CD4-positive, alpha-beta memory T cell (primary cell): ENCODE measurements at regions of chr13 and their contacts with region 1.

Region 1: DNA sequence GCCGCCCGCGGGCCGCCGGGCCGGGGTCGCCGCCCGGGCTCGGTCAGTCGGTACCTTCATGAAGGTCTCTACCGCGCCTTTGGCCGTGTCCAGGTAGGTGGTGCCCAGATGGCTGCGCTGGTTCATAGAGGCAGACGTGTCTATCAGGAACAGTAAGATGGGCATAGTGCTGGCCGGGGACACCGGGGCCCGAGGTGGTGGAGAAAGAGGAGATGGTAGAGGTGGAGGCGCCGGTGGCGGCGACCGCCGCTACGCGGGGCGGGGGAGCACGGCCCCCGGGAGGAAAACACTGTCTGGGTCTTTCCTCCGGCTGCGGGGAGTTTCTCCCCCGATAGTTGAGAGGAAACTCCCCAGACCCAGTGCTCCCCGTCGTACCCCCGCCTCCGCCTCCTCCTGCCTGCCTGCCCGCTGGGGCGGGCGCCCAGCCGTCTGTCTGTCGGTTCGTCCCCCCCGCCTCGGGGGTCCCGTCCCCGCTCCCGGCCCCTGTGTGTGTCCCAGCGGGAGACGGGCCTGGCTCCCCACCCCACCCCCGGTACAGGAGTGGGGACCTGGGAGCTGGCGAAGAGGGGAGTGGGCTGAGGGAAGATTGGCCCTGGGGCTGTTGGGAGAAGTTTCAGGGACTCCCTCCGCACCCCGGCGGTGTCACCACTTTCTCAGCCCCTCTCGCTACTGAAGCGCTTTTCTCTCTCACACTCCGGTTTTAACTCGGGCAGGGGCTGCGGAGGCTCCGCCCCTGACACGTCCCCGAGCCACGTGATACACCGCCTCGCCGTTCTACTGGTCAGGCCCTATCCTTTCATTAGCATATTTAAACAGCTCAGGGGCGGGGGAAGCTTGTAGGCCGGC is at the start of gene INTS6:
- DNase-seq: peak; percentile 98 to 100 (median 100)
- H3K4me3 ChIP-seq: peak within 1 kb of the TSS; percentile 62 to 82
- H3K4me3 Mint-ChIP-seq: peak within 1 kb of the TSS; percentile 89 to 96 (median 94)
- H3K27ac ChIP-seq: peak within 1 kb of the TSS; percentile 97
- H3K27ac Mint-ChIP-seq: peak within 1 kb of the TSS; percentile 94 to 99 (median 98)
- H3K4me1 ChIP-seq: peaks cover 42% of the 10 kb centered on the region
- H3K4me1 Mint-ChIP-seq: peaks cover 34 to 65% (median 40%) of the 10 kb centered on the region in 4 donors
- H3K27me3 ChIP-seq: no peaks in the 10 kb centered on the region
- H3K27me3 Mint-ChIP-seq: peaks cover 0 to 1% of the 10 kb centered on the region in 2 donors
- total RNA-seq, gene INTS6: 55.7 to 65.6 TPM

Region 2: GRCh38 chr13:49495783-49496762 is 1956.5 kb before region 1 on chr13 and contains the start of gene PHF11:
- CTCF ChIA-PET with region 1: no interaction called
- POLR2A ChIA-PET with region 1: no interaction called
- intact Hi-C with region 1: loop called (anchors 5 kb)
- DNase-seq: peak; percentile 85 to 93 (median 87)
- H3K4me3 ChIP-seq: peak within 1 kb of the TSS; percentile 58 to 74
- H3K4me3 Mint-ChIP-seq: peak within 1 kb of the TSS; percentile 98 to 99 (median 98)
- H3K27ac ChIP-seq: peak within 1 kb of the TSS; percentile 94
- H3K27ac Mint-ChIP-seq: peak within 1 kb of the TSS; percentile 99
- H3K4me1 ChIP-seq: peaks cover 54% of the 10 kb centered on the region
- H3K4me1 Mint-ChIP-seq: peaks cover 40 to 64% (median 49%) of the 10 kb centered on the region in 4 donors
- H3K27me3 ChIP-seq: no peaks in the 10 kb centered on the region
- H3K27me3 Mint-ChIP-seq: no peaks in the 10 kb centered on the region
- total RNA-seq, gene PHF11: 138 to 139 TPM

Region 3: DNA sequence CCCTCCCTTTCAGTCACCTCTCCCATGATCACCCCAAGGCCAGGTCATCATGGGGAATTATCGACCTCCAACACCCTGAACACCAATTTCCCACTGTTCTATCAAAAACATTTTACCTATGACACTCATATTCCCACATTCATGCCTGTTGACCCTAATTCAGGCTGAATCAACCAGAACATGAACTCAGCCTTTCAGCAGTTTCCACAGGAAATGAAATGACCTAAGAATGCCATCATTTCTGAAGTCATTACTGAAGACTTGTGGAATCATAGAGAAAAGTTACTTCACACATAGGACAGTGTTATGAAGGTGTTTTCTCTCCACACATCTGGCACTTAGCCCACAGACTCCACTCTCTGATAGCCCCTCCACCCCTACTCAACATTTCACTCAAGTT is 260.2 kb before region 1 on chr13:
- CTCF ChIA-PET with region 1: no interaction called
- POLR2A ChIA-PET with region 1: no interaction called
- intact Hi-C with region 1: no loop called
- DNase-seq: no peak
- H3K4me3 ChIP-seq: no peak overlapping the region
- H3K4me3 Mint-ChIP-seq: no peak overlapping the region
- H3K27ac ChIP-seq: no peak overlapping the region
- H3K27ac Mint-ChIP-seq: no peak overlapping the region
- H3K4me1 ChIP-seq: no peaks in the 10 kb centered on the region
- H3K4me1 Mint-ChIP-seq: no peaks in the 10 kb centered on the region
- H3K27me3 ChIP-seq: no peaks in the 10 kb centered on the region
- H3K27me3 Mint-ChIP-seq: peaks cover 21 to 22% of the 10 kb centered on the region in 2 donors

Region 4: DNA sequence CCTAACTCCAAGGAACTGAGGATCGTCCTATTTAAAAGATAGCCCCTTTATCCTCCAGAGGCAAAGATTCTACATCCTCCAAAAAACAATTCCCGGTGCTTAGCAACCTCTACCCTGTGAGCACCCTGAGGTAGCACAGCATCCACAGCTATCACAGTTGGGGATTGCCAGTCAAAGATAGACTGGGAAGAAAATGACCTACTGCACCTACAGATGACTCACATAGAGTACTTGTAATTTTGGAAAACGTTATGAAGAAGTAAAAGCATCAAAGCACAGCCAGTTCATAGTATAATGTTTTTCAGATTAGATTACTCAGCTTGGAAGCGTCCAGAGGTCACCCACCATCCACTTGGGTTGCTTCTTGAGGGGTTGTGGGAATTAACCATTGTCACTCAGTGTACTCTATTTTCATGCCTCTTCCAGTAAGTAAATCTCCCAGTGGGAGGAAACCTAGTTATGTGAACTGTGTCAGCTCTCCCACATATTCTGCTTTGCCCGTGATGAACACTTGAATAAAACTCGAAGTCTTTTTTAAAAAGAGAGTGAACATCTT is 239.3 kb before region 1 on chr13:
- CTCF ChIA-PET with region 1: no interaction called
- POLR2A ChIA-PET with region 1: no interaction called
- intact Hi-C with region 1: no loop called
- DNase-seq: no peak
- H3K4me3 ChIP-seq: no peak overlapping the region
- H3K4me3 Mint-ChIP-seq: no peak overlapping the region
- H3K27ac ChIP-seq: no peak overlapping the region
- H3K27ac Mint-ChIP-seq: no peak overlapping the region
- H3K4me1 ChIP-seq: no peaks in the 10 kb centered on the region
- H3K4me1 Mint-ChIP-seq: no peaks in the 10 kb centered on the region
- H3K27me3 ChIP-seq: no peaks in the 10 kb centered on the region
- H3K27me3 Mint-ChIP-seq: peaks cover 39 to 43% of the 10 kb centered on the region in 2 donors

Region 5: GRCh38 chr13:51380269-51380668 is 72.3 kb before region 1 on chr13:
- CTCF ChIA-PET with region 1: no interaction called
- POLR2A ChIA-PET with region 1: no interaction called
- intact Hi-C with region 1: no loop called
- DNase-seq: no peak
- H3K4me3 ChIP-seq: no peak overlapping the region
- H3K4me3 Mint-ChIP-seq: no peak overlapping the region
- H3K27ac ChIP-seq: no peak overlapping the region
- H3K27ac Mint-ChIP-seq: no peak overlapping the region
- H3K4me1 ChIP-seq: no peaks in the 10 kb centered on the region
- H3K4me1 Mint-ChIP-seq: no peaks in the 10 kb centered on the region
- H3K27me3 ChIP-seq: no peaks in the 10 kb centered on the region
- H3K27me3 Mint-ChIP-seq: no peaks in the 10 kb centered on the region

Region 6: GRCh38 chr13:51419001-51419636 is 33.5 kb before region 1 on chr13:
- CTCF ChIA-PET with region 1: no interaction called
- POLR2A ChIA-PET with region 1: interaction called, 26 read pairs
- intact Hi-C with region 1: no loop called
- DNase-seq: no peak
- H3K4me3 ChIP-seq: no peak overlapping the region
- H3K4me3 Mint-ChIP-seq: peak overlapping the region in 6 of 8 donors; percentile 5 to 55 (median 20)
- H3K27ac ChIP-seq: no peak overlapping the region
- H3K27ac Mint-ChIP-seq: peak overlapping the region in 6 of 7 donors; percentile 44 to 58 (median 57)
- H3K4me1 ChIP-seq: peaks cover 47% of the 10 kb centered on the region
- H3K4me1 Mint-ChIP-seq: peaks cover 51 to 74% (median 58%) of the 10 kb centered on the region in 4 donors
- H3K27me3 ChIP-seq: no peaks in the 10 kb centered on the region
- H3K27me3 Mint-ChIP-seq: no peaks in the 10 kb centered on the region

Region 7: DNA sequence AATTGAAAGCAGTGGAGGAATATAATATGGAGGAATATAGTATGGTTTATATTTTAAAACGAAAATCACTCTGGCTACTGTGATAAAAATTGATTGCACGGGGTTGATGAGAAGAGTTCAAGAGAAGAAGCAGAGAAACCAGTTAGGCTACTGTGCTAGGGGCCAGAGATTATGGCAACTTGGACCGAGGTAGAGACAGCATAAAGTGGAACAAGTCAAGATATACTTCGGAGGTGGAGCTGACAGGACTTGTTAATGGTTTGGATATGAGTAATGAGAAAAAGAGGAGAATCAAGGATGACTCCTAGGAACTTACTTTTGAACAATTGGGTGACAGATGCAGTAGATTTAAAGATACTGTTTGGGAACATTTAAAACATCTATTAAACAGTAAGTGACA is 125.1 kb after region 1 on chr13:
- CTCF ChIA-PET with region 1: interaction called, 10 read pairs
- POLR2A ChIA-PET with region 1: interaction called, 205 read pairs
- intact Hi-C with region 1: no loop called
- DNase-seq: no peak
- H3K4me3 ChIP-seq: no peak overlapping the region
- H3K4me3 Mint-ChIP-seq: no peak overlapping the region
- H3K27ac ChIP-seq: no peak overlapping the region
- H3K27ac Mint-ChIP-seq: no peak overlapping the region
- H3K4me1 ChIP-seq: no peaks in the 10 kb centered on the region
- H3K4me1 Mint-ChIP-seq: peaks cover 0 to 2% (median under 1%) of the 10 kb centered on the region in 4 donors
- H3K27me3 ChIP-seq: no peaks in the 10 kb centered on the region
- H3K27me3 Mint-ChIP-seq: peaks cover 0 to 1% of the 10 kb centered on the region in 2 donors

Region 8: DNA sequence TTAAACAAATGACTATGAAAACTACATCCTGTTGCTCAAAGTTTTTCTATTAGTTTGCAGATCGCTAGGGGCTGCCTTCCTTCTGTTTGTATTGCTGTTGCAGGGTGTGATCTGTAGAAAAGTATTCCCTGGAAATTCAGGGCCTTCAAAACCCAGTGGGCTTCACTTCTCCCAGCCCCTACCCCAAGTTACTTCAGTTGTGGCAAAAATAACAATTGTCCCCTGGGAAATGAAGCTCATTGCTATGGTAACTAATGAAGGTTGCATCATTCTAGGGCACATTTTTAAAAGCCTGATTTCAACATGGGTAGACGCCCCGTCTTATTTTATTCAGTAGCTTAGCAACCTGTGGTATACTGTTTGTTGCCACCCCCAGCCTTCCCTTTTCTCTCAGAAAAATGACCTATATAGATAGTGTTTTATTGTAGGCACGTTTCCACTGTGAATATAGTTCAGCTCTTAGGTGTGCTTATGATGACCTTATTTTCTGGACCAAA is 192.6 kb after region 1 on chr13:
- CTCF ChIA-PET with region 1: interaction called, 3 read pairs
- POLR2A ChIA-PET with region 1: interaction called, 66 read pairs
- intact Hi-C with region 1: loop called (anchors 5 kb)
- DNase-seq: peak; percentile 79 to 88 (median 81)
- H3K4me3 ChIP-seq: no peak overlapping the region
- H3K4me3 Mint-ChIP-seq: peak overlapping the region; percentile 43 to 89 (median 84)
- H3K27ac ChIP-seq: peak overlapping the region; percentile 74
- H3K27ac Mint-ChIP-seq: peak overlapping the region; percentile 97 to 100 (median 98)
- H3K4me1 ChIP-seq: peaks cover 51% of the 10 kb centered on the region
- H3K4me1 Mint-ChIP-seq: peaks cover 47 to 60% (median 50%) of the 10 kb centered on the region in 4 donors
- H3K27me3 ChIP-seq: no peaks in the 10 kb centered on the region
- H3K27me3 Mint-ChIP-seq: no peaks in the 10 kb centered on the region

Region 9: GRCh38 chr13:51814825-51815650 is 362.5 kb after region 1 on chr13:
- CTCF ChIA-PET with region 1: interaction called, 3 read pairs
- POLR2A ChIA-PET with region 1: interaction called, 117 read pairs
- intact Hi-C with region 1: no loop called
- DNase-seq: peak; percentile 74 to 79 (median 77)
- H3K4me3 ChIP-seq: peak overlapping the region in 1 of 2 donors; percentile 12
- H3K4me3 Mint-ChIP-seq: peak overlapping the region; percentile 52 to 83 (median 70)
- H3K27ac ChIP-seq: peak overlapping the region; percentile 43
- H3K27ac Mint-ChIP-seq: peak overlapping the region; percentile 78 to 97 (median 90)
- H3K4me1 ChIP-seq: peaks cover 62% of the 10 kb centered on the region
- H3K4me1 Mint-ChIP-seq: peaks cover 47 to 85% (median 64%) of the 10 kb centered on the region in 4 donors
- H3K27me3 ChIP-seq: no peaks in the 10 kb centered on the region
- H3K27me3 Mint-ChIP-seq: no peaks in the 10 kb centered on the region

Region 10: GRCh38 chr13:51879133-51879532 is 426.5 kb after region 1 on chr13:
- CTCF ChIA-PET with region 1: no interaction called
- POLR2A ChIA-PET with region 1: no interaction called
- intact Hi-C with region 1: no loop called
- DNase-seq: no peak
- H3K4me3 ChIP-seq: no peak overlapping the region
- H3K4me3 Mint-ChIP-seq: no peak overlapping the region
- H3K27ac ChIP-seq: no peak overlapping the region
- H3K27ac Mint-ChIP-seq: no peak overlapping the region
- H3K4me1 ChIP-seq: no peaks in the 10 kb centered on the region
- H3K4me1 Mint-ChIP-seq: no peaks in the 10 kb centered on the region
- H3K27me3 ChIP-seq: no peaks in the 10 kb centered on the region
- H3K27me3 Mint-ChIP-seq: peaks cover 5 to 9% of the 10 kb centered on the region in 2 donors

Region 11: GRCh38 chr13:52450012-52450792 is 997.6 kb after region 1 on chr13 and contains the start of gene VPS36:
- CTCF ChIA-PET with region 1: interaction called, 4 read pairs
- POLR2A ChIA-PET with region 1: interaction called, 3 read pairs
- intact Hi-C with region 1: loop called (anchors 1 kb)
- DNase-seq: peak; percentile 89 to 94 (median 94)
- H3K4me3 ChIP-seq: peak within 1 kb of the TSS; percentile 53 to 95
- H3K4me3 Mint-ChIP-seq: peak within 1 kb of the TSS; percentile 90 to 98 (median 94)
- H3K27ac ChIP-seq: peak within 1 kb of the TSS; percentile 82
- H3K27ac Mint-ChIP-seq: peak within 1 kb of the TSS; percentile 84 to 95 (median 92)
- H3K4me1 ChIP-seq: peaks cover 38% of the 10 kb centered on the region
- H3K4me1 Mint-ChIP-seq: peaks cover 22 to 55% (median 36%) of the 10 kb centered on the region in 4 donors
- H3K27me3 ChIP-seq: no peaks in the 10 kb centered on the region
- H3K27me3 Mint-ChIP-seq: no peaks in the 10 kb centered on the region
- total RNA-seq, gene VPS36: 59.9 to 64.5 TPM